A549 (cell line): ENCODE measurements at regions of chr22 and their contacts with region 1.

Region 1: GRCh38 chr22:44819971-44820631 is 67.7 kb downstream of the ARHGAP8 start:
- DNase-seq: no peak
- ATAC-seq: peak; percentile 35 to 54; a peak in 3 of 6 replicates
- H3K4me3 ChIP-seq: no peak overlapping the region
- H3K27ac ChIP-seq: no peak overlapping the region
- H3K4me1 ChIP-seq: no peaks in the 10 kb centered on the region
- CTCF ChIP-seq: no peak
- EP300 ChIP-seq: no peak
- POLR2A ChIP-seq: no peak
- RAD21 ChIP-seq: no peak

Region 2: DNA sequence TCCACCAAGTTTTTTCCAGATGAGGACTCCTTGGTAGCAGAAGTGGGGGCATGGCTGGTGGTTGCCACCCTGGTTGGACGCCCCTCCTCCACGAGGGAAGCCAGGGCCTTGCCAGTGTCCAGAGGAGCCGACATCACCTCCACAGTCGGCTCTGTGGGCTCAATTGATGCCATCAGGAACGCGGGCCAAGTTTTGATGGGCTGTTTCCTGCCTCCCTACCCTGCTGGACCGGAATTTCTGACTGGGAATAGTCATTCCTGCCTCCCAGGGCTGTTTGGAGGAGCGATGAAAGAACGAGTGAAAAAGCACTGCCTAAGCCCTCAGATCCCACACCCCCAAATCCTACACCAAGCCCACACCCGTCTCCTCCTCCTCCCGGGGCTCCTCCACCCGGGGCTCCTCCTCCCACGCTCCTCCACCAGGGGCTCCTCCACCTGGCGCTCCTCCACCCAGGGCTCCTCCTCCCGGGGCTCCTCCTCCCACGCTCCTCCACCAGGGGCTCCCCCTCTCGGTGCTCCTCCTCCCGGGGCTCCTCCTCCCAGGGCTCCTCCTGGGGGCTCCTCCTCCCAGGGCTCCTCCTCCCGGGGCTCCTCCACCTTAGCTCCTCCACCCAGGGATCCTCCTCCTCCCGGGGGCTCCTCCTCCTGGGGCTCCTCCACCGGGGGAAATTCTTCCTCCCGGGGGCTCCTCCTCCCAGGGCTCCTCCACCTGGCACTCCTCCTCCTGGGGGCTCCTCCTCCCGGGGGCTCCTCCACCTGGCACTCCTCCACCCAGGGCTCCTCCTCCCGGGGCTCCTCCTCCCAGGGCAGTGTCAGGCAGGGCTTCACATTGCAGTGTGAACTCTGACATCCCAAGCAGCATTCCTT is 128.1 kb before region 1 on chr22:
- CTCF ChIA-PET with region 1: no interaction called
- POLR2A ChIA-PET with region 1: interaction called, 11 read pairs
- DNase-seq: no peak
- ATAC-seq: 0 out of 6 replicates have a peak, but pooled peaks of 1 of the 2 experiments have one; percentile 17
- H3K4me3 ChIP-seq: no peak overlapping the region
- H3K27ac ChIP-seq: no peak overlapping the region
- H3K4me1 ChIP-seq: peaks cover 10% of the 10 kb centered on the region
- CTCF ChIP-seq: no peak
- EP300 ChIP-seq: no peak
- POLR2A ChIP-seq: no peak
- RAD21 ChIP-seq: no peak

Region 3: GRCh38 chr22:44782363-44782963 is 37.6 kb before region 1 on chr22:
- CTCF ChIA-PET with region 1: no interaction called
- POLR2A ChIA-PET with region 1: no interaction called
- DNase-seq: no peak
- ATAC-seq: no peak
- H3K4me3 ChIP-seq: no peak overlapping the region
- H3K27ac ChIP-seq: no peak overlapping the region
- H3K4me1 ChIP-seq: no peaks in the 10 kb centered on the region
- CTCF ChIP-seq: no peak
- EP300 ChIP-seq: no peak
- POLR2A ChIP-seq: no peak
- RAD21 ChIP-seq: no peak

Region 4: GRCh38 chr22:44807915-44808690 is 12.0 kb before region 1 on chr22:
- CTCF ChIA-PET with region 1: interaction called, 13 read pairs
- POLR2A ChIA-PET with region 1: no interaction called
- DNase-seq: no peak
- ATAC-seq: peak in 1 of 2 experiments; percentile 40; a peak in 3 of 6 replicates
- H3K4me3 ChIP-seq: no peak overlapping the region
- H3K27ac ChIP-seq: no peak overlapping the region
- H3K4me1 ChIP-seq: no peaks in the 10 kb centered on the region
- CTCF ChIP-seq: no peak
- EP300 ChIP-seq: no peak
- POLR2A ChIP-seq: no peak
- RAD21 ChIP-seq: no peak

Region 5: DNA sequence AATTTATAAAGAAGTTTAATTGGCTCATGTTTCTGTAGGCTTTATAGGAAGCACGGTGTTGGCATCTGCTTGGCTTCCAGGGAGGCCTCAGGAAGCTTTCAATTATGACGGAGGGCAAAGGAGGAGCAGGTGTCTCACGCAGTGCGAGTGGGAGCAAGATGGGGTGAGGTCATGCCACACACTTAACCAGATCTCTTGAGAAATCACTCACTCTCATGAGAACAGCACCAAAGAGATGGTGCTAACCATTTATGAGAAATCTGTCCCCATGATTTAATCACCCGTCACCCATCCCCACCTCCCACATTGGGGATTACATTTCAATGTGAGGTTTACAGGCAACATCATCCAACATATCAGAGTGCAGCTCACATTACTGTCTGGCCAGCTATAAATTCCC is 35.8 kb after region 1 on chr22:
- CTCF ChIA-PET with region 1: interaction called, 10 read pairs
- POLR2A ChIA-PET with region 1: no interaction called
- DNase-seq: no peak
- ATAC-seq: no peak
- H3K4me3 ChIP-seq: no peak overlapping the region
- H3K27ac ChIP-seq: no peak overlapping the region
- H3K4me1 ChIP-seq: no peaks in the 10 kb centered on the region
- CTCF ChIP-seq: no peak
- EP300 ChIP-seq: no peak
- POLR2A ChIP-seq: no peak
- RAD21 ChIP-seq: no peak